ENCODE measurements at regions of chr10 and their contacts with region 1.

Region 1: DNA sequence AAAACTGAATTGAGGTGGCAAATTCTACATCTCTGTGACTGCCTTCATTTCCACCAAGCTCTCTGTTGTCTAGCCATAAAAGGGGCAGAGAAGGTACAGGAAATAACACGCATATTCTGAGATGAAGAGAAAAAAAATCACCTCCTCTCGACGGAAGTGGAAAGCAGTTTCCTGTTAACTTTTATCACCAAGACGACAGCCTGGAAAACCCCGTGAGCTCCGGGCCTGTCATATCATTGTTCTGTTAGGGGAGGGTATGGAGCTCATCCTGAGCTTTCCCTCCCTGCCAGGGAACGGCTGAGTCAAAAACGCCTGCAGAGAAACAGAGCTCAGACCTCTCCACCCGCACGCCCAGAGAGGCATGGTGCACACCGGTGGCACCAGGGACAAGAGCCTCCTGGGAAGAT is 200.3 kb downstream of the PRPF18 start:
- DNase-seq: peak; percentile 37 to 94 (median 91)
- ATAC-seq: peak; percentile 94
- H3K4me3 ChIP-seq: peak overlapping the region; percentile 17
- H3K4me3 Mint-ChIP-seq: peak overlapping the region in 9 of 10 donors; percentile 76 to 88 (median 84)
- H3K27ac ChIP-seq: peak overlapping the region; percentile 93
- H3K27ac Mint-ChIP-seq: no peak overlapping the region
- H3K4me1 ChIP-seq: peaks cover 29 to 50% of the 10 kb centered on the region in 2 donors
- H3K4me1 Mint-ChIP-seq: peaks cover 11 to 37% (median 20%) of the 10 kb centered on the region in 7 donors
- H3K27me3 ChIP-seq: no peaks in the 10 kb centered on the region
- H3K27me3 Mint-ChIP-seq: no peaks in the 10 kb centered on the region

Region 2: GRCh38 chr10:12594448-12594944 is 1192.5 kb before region 1 on chr10:
- CTCF ChIA-PET with region 1: no interaction called
- POLR2A ChIA-PET with region 1: no interaction called
- intact Hi-C with region 1: loop called in 1 of 2 experiments (anchors 5 kb)
- DNase-seq: peak in 8 of 9 donors; percentile 25 to 66 (median 52)
- ATAC-seq: peak; percentile 78
- H3K4me3 ChIP-seq: no peak overlapping the region
- H3K4me3 Mint-ChIP-seq: peak overlapping the region; percentile 61 to 90 (median 72)
- H3K27ac ChIP-seq: peak overlapping the region; percentile 41
- H3K27ac Mint-ChIP-seq: peak overlapping the region; percentile 90 to 99 (median 94)
- H3K4me1 ChIP-seq: peaks cover 15 to 65% of the 10 kb centered on the region in 2 donors
- H3K4me1 Mint-ChIP-seq: peaks cover 43 to 100% (median 94%) of the 10 kb centered on the region in 7 donors
- H3K27me3 ChIP-seq: no peaks in the 10 kb centered on the region
- H3K27me3 Mint-ChIP-seq: no peaks in the 10 kb centered on the region

Region 3: GRCh38 chr10:13440185-13441061 is 346.6 kb before region 1 on chr10:
- CTCF ChIA-PET with region 1: no interaction called
- POLR2A ChIA-PET with region 1: no interaction called
- intact Hi-C with region 1: loop called in 1 of 2 experiments (anchors 10 kb)
- DNase-seq: peak; percentile 39 to 76 (median 67)
- ATAC-seq: peak; percentile 96
- H3K4me3 ChIP-seq: peak overlapping the region; percentile 56
- H3K4me3 Mint-ChIP-seq: peak overlapping the region; percentile 38 to 86 (median 76)
- H3K27ac ChIP-seq: no peak overlapping the region
- H3K27ac Mint-ChIP-seq: peak overlapping the region in 2 of 9 donors; percentile 32 to 37
- H3K4me1 ChIP-seq: peaks cover 9 to 11% of the 10 kb centered on the region in 2 donors
- H3K4me1 Mint-ChIP-seq: peaks cover 5 to 16% (median 14%) of the 10 kb centered on the region in 7 donors
- H3K27me3 ChIP-seq: peaks cover 0 to 9% of the 10 kb centered on the region in 2 donors
- H3K27me3 Mint-ChIP-seq: peaks cover 38 to 57% (median 48%) of the 10 kb centered on the region in 5 donors

Region 4: GRCh38 chr10:13712837-13713581 is 74.0 kb before region 1 on chr10:
- CTCF ChIA-PET with region 1: no interaction called
- POLR2A ChIA-PET with region 1: no interaction called
- intact Hi-C with region 1: no loop called
- DNase-seq: no peak
- ATAC-seq: peak; percentile 79
- H3K4me3 ChIP-seq: no peak overlapping the region
- H3K4me3 Mint-ChIP-seq: no peak overlapping the region
- H3K27ac ChIP-seq: no peak overlapping the region
- H3K27ac Mint-ChIP-seq: peak overlapping the region in 1 of 9 donors; percentile 15
- H3K4me1 ChIP-seq: peaks cover 0 to 6% of the 10 kb centered on the region in 2 donors
- H3K4me1 Mint-ChIP-seq: peaks cover 5 to 19% (median 10%) of the 10 kb centered on the region in 7 donors
- H3K27me3 ChIP-seq: peaks cover 0 to 2% of the 10 kb centered on the region in 2 donors
- H3K27me3 Mint-ChIP-seq: peaks cover 0 to 15% (median 5%) of the 10 kb centered on the region in 5 donors

Region 5: DNA sequence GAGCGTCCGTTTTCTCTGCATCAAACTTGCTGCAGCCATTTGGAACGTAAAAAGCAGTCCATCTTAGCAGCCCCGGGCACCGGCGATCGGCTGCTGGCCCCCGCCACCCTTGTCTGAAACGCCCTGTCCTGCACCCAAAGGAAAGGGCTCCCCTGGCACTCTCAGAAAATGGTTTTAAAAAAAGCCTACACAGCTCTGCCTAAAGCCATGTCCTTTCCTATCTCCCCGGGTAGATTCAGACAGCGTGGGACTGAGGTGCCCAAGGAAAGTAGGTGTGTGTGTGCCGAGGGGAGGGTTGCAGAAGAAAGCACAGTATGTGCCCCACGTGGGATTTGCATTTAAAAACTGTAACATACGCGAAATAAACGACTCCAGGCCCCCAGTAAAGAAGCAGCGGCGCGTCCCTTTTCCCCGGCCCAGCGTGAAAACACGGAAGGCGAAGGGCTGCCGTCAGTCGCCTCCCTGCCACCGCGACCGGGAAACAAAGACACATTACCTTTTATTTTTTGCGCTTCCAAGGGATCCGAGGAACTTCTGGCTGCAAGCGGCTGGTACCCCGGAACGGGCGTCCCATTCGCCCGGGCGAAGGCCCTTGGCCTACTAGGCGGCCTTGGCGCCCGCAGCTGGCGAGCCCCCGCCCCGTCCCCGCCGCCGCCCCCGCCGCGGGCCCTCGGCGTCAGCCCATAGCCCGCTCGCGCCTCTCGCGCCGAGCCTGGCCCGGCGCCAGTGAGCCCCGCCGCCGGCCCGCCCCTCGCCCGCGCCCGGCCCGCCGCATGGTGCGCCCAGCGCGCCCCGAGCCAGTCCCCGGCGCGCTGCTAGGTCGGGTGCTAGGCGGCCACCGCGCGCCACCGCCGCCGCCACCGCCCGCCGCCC is 104.3 kb after region 1 on chr10:
- CTCF ChIA-PET with region 1: no interaction called
- POLR2A ChIA-PET with region 1: interaction called, 3 read pairs
- intact Hi-C with region 1: loop called in 1 of 2 experiments (anchors 5 kb)
- DNase-seq: peak in 3 of 9 donors; percentile 7 to 11 (median 7)
- ATAC-seq: peak; percentile 51
- H3K4me3 ChIP-seq: peak overlapping the region; percentile 32
- H3K4me3 Mint-ChIP-seq: peak overlapping the region; percentile 27 to 95 (median 83)
- H3K27ac ChIP-seq: no peak overlapping the region
- H3K27ac Mint-ChIP-seq: peak overlapping the region in 1 of 9 donors; percentile 71
- H3K4me1 ChIP-seq: peaks cover 5 to 8% of the 10 kb centered on the region in 2 donors
- H3K4me1 Mint-ChIP-seq: peaks cover 8 to 37% (median 26%) of the 10 kb centered on the region in 7 donors
- H3K27me3 ChIP-seq: peaks cover 3 to 16% of the 10 kb centered on the region in 2 donors
- H3K27me3 Mint-ChIP-seq: peaks cover 67 to 82% (median 70%) of the 10 kb centered on the region in 5 donors

Region 6: GRCh38 chr10:14102056-14102455 is 315.0 kb after region 1 on chr10:
- CTCF ChIA-PET with region 1: no interaction called
- POLR2A ChIA-PET with region 1: no interaction called
- intact Hi-C with region 1: no loop called
- DNase-seq: no peak
- ATAC-seq: no peak
- H3K4me3 ChIP-seq: no peak overlapping the region
- H3K4me3 Mint-ChIP-seq: no peak overlapping the region
- H3K27ac ChIP-seq: no peak overlapping the region
- H3K27ac Mint-ChIP-seq: no peak overlapping the region
- H3K4me1 ChIP-seq: no peaks in the 10 kb centered on the region
- H3K4me1 Mint-ChIP-seq: peaks cover 0 to 2% (median 0%) of the 10 kb centered on the region in 7 donors
- H3K27me3 ChIP-seq: no peaks in the 10 kb centered on the region
- H3K27me3 Mint-ChIP-seq: peaks cover 0 to 13% (median 6%) of the 10 kb centered on the region in 5 donors

Region 7: DNA sequence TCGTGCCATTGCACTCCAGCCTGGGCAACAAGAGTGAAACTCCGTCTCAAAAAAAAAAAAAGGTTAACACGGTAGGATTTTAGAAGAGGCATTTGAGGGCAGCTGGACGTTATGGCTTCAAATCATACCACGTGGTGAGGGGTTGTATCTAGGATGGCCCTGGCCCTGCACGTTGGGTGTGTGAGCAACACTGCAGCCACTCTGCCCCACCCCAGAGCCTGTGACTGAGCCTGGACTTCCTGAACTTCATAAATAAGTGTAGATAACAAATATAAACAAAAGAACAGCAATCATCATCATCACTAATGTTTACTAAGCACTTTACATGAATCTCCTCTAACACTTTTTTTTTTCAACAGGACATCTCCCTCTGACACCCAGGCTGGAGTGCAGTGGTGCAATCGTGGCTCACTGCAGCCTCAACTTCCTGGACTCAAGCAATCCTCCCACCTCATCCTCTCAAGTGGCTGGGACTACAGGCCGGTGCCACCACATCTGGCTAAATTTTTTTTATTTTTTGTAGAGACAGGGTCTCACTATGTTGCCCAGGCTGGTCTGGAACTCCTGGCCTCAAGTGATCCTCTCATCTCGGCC is 713.3 kb after region 1 on chr10:
- CTCF ChIA-PET with region 1: interaction called, 4 read pairs
- POLR2A ChIA-PET with region 1: no interaction called
- intact Hi-C with region 1: loop called in 1 of 2 experiments (anchors 5 kb)
- DNase-seq: no peak
- ATAC-seq: no peak
- H3K4me3 ChIP-seq: no peak overlapping the region
- H3K4me3 Mint-ChIP-seq: no peak overlapping the region
- H3K27ac ChIP-seq: no peak overlapping the region
- H3K27ac Mint-ChIP-seq: peak overlapping the region in 4 of 9 donors; percentile 28 to 56 (median 40)
- H3K4me1 ChIP-seq: no peaks in the 10 kb centered on the region
- H3K4me1 Mint-ChIP-seq: peaks cover 4 to 15% (median 6%) of the 10 kb centered on the region in 7 donors
- H3K27me3 ChIP-seq: no peaks in the 10 kb centered on the region
- H3K27me3 Mint-ChIP-seq: peaks cover 0 to 12% (median 0%) of the 10 kb centered on the region in 5 donors

Region 8: GRCh38 chr10:14822879-14823755 is 1036.1 kb after region 1 on chr10:
- CTCF ChIA-PET with region 1: no interaction called
- POLR2A ChIA-PET with region 1: no interaction called
- intact Hi-C with region 1: loop called in 1 of 2 experiments (anchors 5 kb)
- DNase-seq: peak in 6 of 9 donors; percentile 14 to 54 (median 38)
- ATAC-seq: peak; percentile 64
- H3K4me3 ChIP-seq: no peak overlapping the region
- H3K4me3 Mint-ChIP-seq: no peak overlapping the region
- H3K27ac ChIP-seq: no peak overlapping the region
- H3K27ac Mint-ChIP-seq: peak overlapping the region in 4 of 9 donors; percentile 5 to 14 (median 10)
- H3K4me1 ChIP-seq: no peaks in the 10 kb centered on the region
- H3K4me1 Mint-ChIP-seq: peaks cover 0 to 15% (median 3%) of the 10 kb centered on the region in 7 donors
- H3K27me3 ChIP-seq: no peaks in the 10 kb centered on the region
- H3K27me3 Mint-ChIP-seq: peaks cover 0 to 10% (median 0%) of the 10 kb centered on the region in 5 donors

Region 9: GRCh38 chr10:15097011-15097812 is 1310.2 kb after region 1 on chr10 and contains the start of gene RPP38:
- CTCF ChIA-PET with region 1: no interaction called
- POLR2A ChIA-PET with region 1: interaction called, 3 read pairs
- intact Hi-C with region 1: loop called (anchors 5 kb)
- DNase-seq: peak; percentile 88 to 98 (median 95)
- ATAC-seq: peak; percentile 85
- H3K4me3 ChIP-seq: peak within 1 kb of the TSS; percentile 80
- H3K4me3 Mint-ChIP-seq: peak within 1 kb of the TSS; percentile 91 to 100 (median 98)
- H3K27ac ChIP-seq: peak within 1 kb of the TSS; percentile 94
- H3K27ac Mint-ChIP-seq: peak within 1 kb of the TSS; percentile 94 to 100 (median 98)
- H3K4me1 ChIP-seq: peaks cover 16 to 22% of the 10 kb centered on the region in 2 donors
- H3K4me1 Mint-ChIP-seq: peaks cover 22 to 50% (median 40%) of the 10 kb centered on the region in 7 donors
- H3K27me3 ChIP-seq: no peaks in the 10 kb centered on the region
- H3K27me3 Mint-ChIP-seq: peaks cover 0 to 3% (median 0%) of the 10 kb centered on the region in 5 donors
- total RNA-seq, gene RPP38: 7.6 to 22.4 (median 16.0) TPM